Left ventricle myocardium superior (tissue), 1 donor: ENCODE measurements at regions of chr11 and their contacts with region 1.

Region 1: DNA sequence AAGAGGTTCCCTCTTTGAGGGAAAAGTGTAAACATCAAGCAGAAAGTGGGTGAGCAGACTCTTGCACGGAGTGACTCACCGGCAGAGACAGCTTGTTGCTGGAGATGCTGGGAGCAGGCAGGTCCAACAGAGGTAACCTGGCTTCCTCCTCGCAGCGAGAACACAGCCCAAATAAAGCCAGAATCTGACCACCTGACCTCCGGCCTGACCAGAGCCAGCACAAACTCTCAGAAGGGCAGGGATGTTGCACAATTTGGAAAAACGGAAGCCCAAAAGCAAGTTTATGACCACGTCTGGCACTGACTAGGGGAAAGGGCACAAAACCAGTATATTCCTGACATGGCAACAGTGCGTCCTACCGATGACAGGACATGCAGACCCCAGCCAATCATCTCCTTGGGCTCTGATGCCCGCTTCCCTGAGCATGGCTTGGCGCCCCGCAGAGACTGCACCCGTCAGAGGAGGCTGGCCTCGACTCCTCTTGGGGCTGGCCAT is 5.4 kb downstream of the SMCO4 start:
- DNase-seq: peak; percentile 56
- ATAC-seq: peak; percentile 18

Region 2: DNA sequence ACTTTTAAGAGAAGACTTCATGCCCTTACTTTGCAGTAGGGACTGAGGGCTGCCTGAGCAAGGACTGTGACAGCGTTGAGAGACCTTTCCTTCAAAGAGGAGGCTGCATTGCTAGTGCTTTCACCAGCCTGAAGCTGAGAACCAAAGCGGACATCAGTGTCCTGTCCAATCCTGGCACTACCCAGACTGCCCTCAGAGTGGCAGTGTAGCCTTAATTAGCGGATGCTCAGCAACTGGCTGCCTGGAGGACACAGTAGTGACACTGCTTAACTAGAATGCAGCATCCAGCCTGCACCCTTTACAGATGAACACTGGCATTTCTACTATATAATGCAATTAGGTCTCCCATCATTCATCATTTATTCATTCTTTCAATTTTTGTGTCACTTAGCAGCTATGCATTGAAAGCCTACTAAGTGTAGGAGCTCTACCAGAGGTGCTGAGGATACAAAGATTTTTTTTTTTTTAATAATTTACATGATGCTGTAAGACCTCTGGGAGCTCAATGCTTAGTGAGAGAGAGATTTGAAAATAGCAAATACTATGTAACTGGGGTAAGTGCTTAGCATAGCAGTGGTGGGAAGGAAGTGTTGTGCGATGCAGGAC is 303.1 kb before region 1 on chr11:
- intact Hi-C with region 1: loop called (anchors 5 kb)
- DNase-seq: peak; percentile 71
- ATAC-seq: peak; percentile 99